Tibial artery (tissue), 4 donors: ENCODE measurements at regions of chr3 and their contacts with region 1.

Region 1: GRCh38 chr3:94009608-94010007 is 18.8 kb downstream of the STX19 start:
- DNase-seq: no peak
- H3K4me3 ChIP-seq: no peak overlapping the region
- H3K27ac ChIP-seq: no peak overlapping the region
- H3K4me1 ChIP-seq: no peaks in the 10 kb centered on the region
- H3K27me3 ChIP-seq: no peaks in the 10 kb centered on the region
- CTCF ChIP-seq: no peak

Region 2: DNA sequence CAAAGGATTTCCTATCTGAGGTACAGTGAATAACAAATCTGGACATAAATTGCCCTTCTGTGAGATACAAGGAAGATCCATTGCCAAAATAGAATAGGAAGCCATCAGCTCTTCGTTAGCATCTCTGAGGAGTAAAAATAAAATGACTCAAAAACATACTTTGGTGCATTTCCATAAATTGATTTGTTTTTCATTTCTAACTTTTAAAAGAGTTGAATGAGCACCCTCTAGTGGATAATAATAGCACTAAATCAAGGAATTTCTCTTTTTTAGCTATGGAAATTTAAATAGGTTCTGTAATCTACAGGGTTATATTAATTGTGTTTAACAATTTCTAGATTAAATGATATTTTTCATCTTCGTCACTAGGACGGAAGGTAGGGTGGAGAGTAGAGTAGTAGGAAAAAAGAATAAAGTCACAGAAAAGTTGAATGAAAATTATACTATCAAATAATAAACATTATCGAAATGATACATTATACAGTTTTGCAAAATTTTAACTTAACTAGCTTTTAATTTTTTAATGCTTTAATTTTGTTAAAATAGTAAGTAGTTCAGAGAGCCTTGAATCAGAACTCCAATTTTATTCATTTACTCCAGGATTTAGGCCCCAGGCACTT is 59.7 kb after region 1 on chr3:
- intact Hi-C with region 1: loop called (anchors 5 kb)
- DNase-seq: no peak
- H3K4me3 ChIP-seq: no peak overlapping the region
- H3K27ac ChIP-seq: no peak overlapping the region
- H3K4me1 ChIP-seq: peaks cover 0 to 24% (median 9%) of the 10 kb centered on the region in 4 donors
- H3K27me3 ChIP-seq: no peaks in the 10 kb centered on the region
- CTCF ChIP-seq: peak; percentile 60 to 62

Region 3: DNA sequence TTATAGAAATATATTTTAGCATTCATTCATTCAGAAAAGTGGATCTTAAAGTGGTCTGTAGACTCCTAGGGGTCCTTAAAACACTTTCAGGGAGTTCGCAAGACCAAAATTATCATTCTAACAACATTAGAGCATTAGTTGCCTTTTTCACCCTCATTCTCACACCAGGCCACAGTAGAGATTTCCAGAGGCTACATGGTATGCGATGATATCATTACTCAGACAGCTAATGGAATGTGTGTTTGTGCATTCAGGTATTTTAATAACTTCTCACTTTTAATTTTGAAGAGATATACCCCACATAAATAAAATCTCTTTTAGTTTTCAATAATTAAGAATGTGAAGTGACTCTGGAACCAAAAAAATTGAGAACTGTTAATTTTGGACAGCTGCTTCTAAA is 260.2 kb after region 1 on chr3:
- intact Hi-C with region 1: no loop called
- DNase-seq: no peak
- H3K4me3 ChIP-seq: no peak overlapping the region
- H3K27ac ChIP-seq: no peak overlapping the region
- H3K4me1 ChIP-seq: no peaks in the 10 kb centered on the region
- H3K27me3 ChIP-seq: no peaks in the 10 kb centered on the region
- CTCF ChIP-seq: no peak

Region 4: DNA sequence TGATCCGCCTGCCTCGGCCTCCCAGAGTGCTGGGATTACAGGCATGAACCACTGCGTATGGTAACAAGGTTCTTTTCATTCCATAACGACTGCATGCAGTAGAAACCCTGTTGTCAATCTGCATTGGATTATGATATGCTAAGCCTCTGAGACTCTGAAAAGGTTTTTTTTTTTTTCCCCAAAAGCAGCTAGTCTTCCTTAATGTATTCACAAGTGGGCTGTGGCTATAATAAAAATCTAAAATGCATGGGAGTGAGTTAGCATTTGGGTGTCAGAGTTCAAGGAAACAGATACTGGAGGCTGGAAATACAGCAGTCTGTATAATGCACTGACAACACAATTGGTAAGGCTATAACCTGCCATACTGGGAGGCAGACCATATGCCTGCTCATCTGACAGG is 271.4 kb after region 1 on chr3:
- intact Hi-C with region 1: no loop called
- DNase-seq: no peak
- H3K4me3 ChIP-seq: no peak overlapping the region
- H3K27ac ChIP-seq: no peak overlapping the region
- H3K4me1 ChIP-seq: no peaks in the 10 kb centered on the region
- H3K27me3 ChIP-seq: no peaks in the 10 kb centered on the region
- CTCF ChIP-seq: no peak